H1 (cell line): ENCODE measurements at regions of chr20 and their contacts with region 1.

Region 1: GRCh38 chr20:34312544-34313217 is 9.5 kb upstream of the AHCY start:
- DNase-seq: peak; percentile 87 to 97
- H3K4me3 ChIP-seq: peak overlapping the region; percentile 1 to 67 (median 51); a peak in 7 of 8 replicates
- H3K27ac ChIP-seq: no peak overlapping the region
- H3K4me1 ChIP-seq: peaks cover 0 to 3% (median 0%) of the 10 kb centered on the region in 4 experiments; a peak in 2 of 7 replicates
- H3K27me3 ChIP-seq: peaks cover 0 to 8% (median 7%) of the 10 kb centered on the region in 4 experiments; a peak in 5 of 7 replicates
- CTCF ChIP-seq: peak; percentile 100
- EP300 ChIP-seq: peak in 1 of 2 experiments; percentile 33; a peak in 1 of 3 replicates
- POLR2A ChIP-seq: no peak
- RAD21 ChIP-seq: peak; percentile 100

Region 2: DNA sequence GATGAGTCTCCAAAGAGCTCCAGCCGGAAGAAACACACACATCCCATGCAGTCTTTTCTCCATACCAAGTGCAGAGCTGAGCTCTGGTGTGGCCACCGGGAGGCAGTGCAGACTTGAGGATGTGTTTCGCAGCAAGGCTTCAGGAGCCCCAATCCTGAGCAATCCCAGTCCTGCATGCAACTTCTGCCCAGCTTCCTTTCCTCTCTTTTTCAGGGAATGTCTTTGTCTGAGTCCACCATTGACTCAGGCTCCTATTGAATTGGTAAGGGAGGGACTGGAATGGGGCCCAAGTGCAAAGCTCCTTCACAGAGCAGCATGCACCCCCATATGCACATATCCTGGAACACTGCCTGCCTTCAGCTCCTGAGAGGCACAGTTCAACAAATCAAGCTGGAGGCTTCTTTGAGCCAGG is 122.0 kb before region 1 on chr20:
- CTCF ChIA-PET with region 1: interaction called, 11 read pairs
- POLR2A ChIA-PET with region 1: no interaction called
- DNase-seq: peak; percentile 67 to 84
- H3K4me3 ChIP-seq: no peak overlapping the region
- H3K27ac ChIP-seq: no peak overlapping the region
- H3K4me1 ChIP-seq: peaks cover 0 to 6% (median 3%) of the 10 kb centered on the region in 4 experiments; a peak in 4 of 7 replicates
- H3K27me3 ChIP-seq: no peaks in the 10 kb centered on the region
- CTCF ChIP-seq: peak; percentile 89 to 97 (median 89)
- EP300 ChIP-seq: no peak
- POLR2A ChIP-seq: 0 out of 3 replicates have a peak, but pooled peaks of 1 of the 2 experiments have one; percentile 24
- RAD21 ChIP-seq: peak; percentile 96 to 98

Region 3: GRCh38 chr20:34350095-34350494 is 37.4 kb after region 1 on chr20:
- CTCF ChIA-PET with region 1: interaction called, 11 read pairs
- POLR2A ChIA-PET with region 1: no interaction called
- DNase-seq: no peak
- H3K4me3 ChIP-seq: no peak overlapping the region
- H3K27ac ChIP-seq: no peak overlapping the region
- H3K4me1 ChIP-seq: peaks cover 0 to 7% (median 2%) of the 10 kb centered on the region in 4 experiments; a peak in 3 of 7 replicates
- H3K27me3 ChIP-seq: no peaks in the 10 kb centered on the region
- CTCF ChIP-seq: no peak
- EP300 ChIP-seq: no peak
- POLR2A ChIP-seq: no peak
- RAD21 ChIP-seq: no peak

Region 4: GRCh38 chr20:34415079-34415478 is 102.4 kb after region 1 on chr20:
- CTCF ChIA-PET with region 1: interaction called, 21 read pairs
- POLR2A ChIA-PET with region 1: no interaction called
- DNase-seq: no peak
- H3K4me3 ChIP-seq: no peak overlapping the region
- H3K27ac ChIP-seq: no peak overlapping the region
- H3K4me1 ChIP-seq: no peaks in the 10 kb centered on the region
- H3K27me3 ChIP-seq: no peaks in the 10 kb centered on the region
- CTCF ChIP-seq: no peak
- EP300 ChIP-seq: no peak
- POLR2A ChIP-seq: no peak
- RAD21 ChIP-seq: no peak

Region 5: GRCh38 chr20:34452281-34452982 is 139.8 kb after region 1 on chr20:
- CTCF ChIA-PET with region 1: interaction called, 22 read pairs
- POLR2A ChIA-PET with region 1: no interaction called
- DNase-seq: no peak
- H3K4me3 ChIP-seq: no peak overlapping the region
- H3K27ac ChIP-seq: no peak overlapping the region
- H3K4me1 ChIP-seq: no peaks in the 10 kb centered on the region
- H3K27me3 ChIP-seq: no peaks in the 10 kb centered on the region
- CTCF ChIP-seq: no peak
- EP300 ChIP-seq: no peak
- POLR2A ChIP-seq: no peak
- RAD21 ChIP-seq: no peak

Region 6: DNA sequence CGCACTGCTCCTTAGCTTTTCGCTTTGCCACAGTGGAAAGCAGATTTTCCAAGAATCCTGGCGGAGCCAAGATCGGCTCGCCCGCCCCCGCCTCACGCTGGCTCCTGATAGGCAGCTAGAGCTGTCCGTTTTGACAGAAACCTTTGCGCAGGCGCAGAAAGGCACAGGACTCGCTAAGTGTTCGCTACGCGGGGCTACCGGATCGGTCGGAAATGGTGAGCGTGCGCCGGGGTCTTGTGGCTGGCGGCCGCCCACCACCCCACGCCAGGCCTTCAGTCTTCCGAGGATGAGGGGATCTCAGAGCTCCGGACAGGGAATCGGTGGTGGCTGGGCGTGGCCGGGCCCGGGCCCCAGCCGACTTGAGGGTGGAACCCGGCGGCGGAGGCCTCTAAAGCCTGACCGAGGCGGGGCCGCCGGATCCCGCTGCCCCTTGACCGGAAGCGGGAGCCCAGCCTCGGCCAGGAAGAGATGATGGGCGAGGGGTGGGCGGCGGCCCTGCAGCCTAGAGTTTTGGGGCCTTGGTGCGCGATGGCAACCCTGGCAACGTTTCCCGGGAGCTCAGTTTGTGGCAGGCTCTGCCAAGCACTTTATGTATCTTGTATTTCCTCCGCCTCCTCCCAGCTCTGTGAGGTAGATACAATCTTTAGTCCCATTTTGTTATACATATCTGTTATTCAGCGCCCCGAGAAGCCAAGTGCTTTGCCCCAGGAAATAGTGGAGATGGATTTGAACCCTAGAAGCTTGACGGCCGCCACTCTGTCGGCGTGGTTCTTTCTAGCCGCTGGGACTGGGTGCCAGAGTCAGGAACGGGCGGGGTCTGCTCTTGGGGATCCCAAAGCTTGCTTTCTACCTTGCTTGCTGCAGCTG is 203.8 kb after region 1 on chr20 and contains the start of gene DYNLRB1:
- CTCF ChIA-PET with region 1: interaction called, 50 read pairs
- POLR2A ChIA-PET with region 1: interaction called, 13 read pairs
- DNase-seq: peak; percentile 79 to 99
- H3K4me3 ChIP-seq: peak within 1 kb of the TSS; percentile 77 to 87 (median 82)
- H3K27ac ChIP-seq: peak within 1 kb of the TSS; percentile 74
- H3K4me1 ChIP-seq: peaks cover 0 to 3% (median 3%) of the 10 kb centered on the region in 4 experiments; a peak in 3 of 7 replicates
- H3K27me3 ChIP-seq: no peaks in the 10 kb centered on the region
- CTCF ChIP-seq: no peak
- EP300 ChIP-seq: no peak
- POLR2A ChIP-seq: peak; percentile 76 to 77
- RAD21 ChIP-seq: no peak
- total RNA-seq, gene DYNLRB1: 107 and 109 TPM in 2 replicates